B cell (primary cell): ENCODE measurements at regions of chr11 and their contacts with region 1.

Region 1: DNA sequence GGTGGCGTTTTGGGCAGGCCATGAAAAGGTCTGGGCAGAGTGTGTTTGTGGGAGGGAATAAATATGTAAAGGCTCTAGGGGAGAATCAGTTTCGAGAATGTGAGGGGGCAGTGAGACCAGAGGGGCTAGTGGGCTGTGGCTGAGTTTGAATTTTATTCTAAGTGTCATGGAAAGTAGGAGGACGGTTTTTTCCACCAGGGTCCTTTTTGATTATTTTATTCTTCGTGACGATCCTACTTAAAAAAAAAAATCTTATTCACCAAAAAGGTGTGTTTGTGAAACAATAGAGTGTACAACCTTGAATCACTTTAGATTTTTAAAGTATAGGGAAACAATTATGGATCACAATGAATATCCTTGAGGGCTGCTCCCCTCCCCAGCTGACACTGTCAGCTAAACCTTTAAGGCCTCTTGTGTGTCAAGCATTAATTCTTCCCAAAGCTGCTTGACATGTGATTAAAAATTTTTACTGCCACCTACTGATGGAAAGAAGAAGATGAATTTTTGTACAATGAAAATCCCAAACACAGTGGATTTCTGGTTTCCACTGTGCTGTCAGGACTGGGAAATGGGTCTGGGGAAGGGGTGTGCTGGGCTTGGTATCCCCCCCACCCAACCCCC is 107.5 kb upstream of the OR4B1 start:
- DNase-seq: no peak
- ATAC-seq: peak; percentile 12
- H3K4me3 ChIP-seq: peak overlapping the region; percentile 5 to 68 (median 39)
- H3K4me3 Mint-ChIP-seq: peak overlapping the region; percentile 74
- H3K27ac ChIP-seq: peak overlapping the region; percentile 54 to 80
- H3K27ac Mint-ChIP-seq: peak overlapping the region; percentile 70
- H3K4me1 ChIP-seq: peaks cover 69 to 78% of the 10 kb centered on the region in 2 donors
- H3K4me1 Mint-ChIP-seq: peaks cover 70% of the 10 kb centered on the region
- H3K27me3 ChIP-seq: no peaks in the 10 kb centered on the region
- H3K27me3 Mint-ChIP-seq: no peaks in the 10 kb centered on the region
- CTCF ChIP-seq: no peak

Region 2: DNA sequence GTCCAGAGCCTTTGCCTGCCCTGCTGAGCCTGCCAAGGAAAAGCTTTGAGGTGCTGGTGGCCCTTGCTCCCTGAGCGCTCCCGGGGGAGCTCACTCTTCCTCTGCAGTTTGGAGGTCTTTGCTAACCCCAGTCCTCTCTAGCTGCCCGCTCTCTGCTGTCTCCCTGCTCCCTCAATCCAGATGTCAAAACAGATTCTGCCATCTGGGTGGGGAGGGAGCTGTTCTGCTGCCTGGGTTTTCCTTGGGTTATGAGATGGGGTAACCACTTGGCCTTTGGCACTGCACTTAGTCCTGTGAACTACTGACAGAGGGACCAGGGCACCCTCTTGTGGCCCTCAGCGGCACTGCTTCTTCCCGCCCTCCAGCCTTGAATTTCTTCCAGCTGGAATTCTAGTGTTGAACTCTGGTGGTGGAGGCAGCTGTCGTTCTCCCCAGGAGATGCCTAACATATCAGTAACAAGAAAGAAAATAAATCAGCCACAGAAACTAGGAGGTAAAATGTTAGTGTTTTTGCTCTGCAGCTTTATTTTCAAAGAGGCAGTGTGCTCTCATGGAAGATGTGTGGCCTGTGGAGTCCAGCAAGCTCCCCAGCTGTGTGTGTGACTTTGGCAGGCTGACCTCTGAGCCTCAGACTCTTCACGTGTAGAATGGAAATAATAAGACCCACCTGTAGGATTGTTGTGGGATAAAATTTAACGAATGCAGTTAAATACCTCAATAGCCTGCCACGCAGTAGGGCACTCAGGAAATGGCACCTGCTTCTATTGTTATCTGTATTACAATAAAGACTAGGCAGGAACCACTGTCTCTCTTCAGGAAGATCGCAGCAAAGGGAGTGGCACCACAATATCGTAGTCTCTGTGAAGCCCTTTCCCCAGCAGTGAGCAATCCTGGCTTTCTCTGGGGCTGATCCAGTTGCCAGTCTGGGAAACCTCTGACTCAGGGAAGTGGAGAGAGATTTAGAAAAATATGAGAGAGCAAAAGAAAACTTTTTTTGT is 955.9 kb before region 1 on chr11:
- CTCF ChIA-PET with region 1: no interaction called
- POLR2A ChIA-PET with region 1: no interaction called
- intact Hi-C with region 1: no loop called
- DNase-seq: peak; percentile 67
- ATAC-seq: peak; percentile 61
- H3K4me3 ChIP-seq: no peak overlapping the region
- H3K4me3 Mint-ChIP-seq: peak overlapping the region; percentile 14
- H3K27ac ChIP-seq: no peak overlapping the region
- H3K27ac Mint-ChIP-seq: no peak overlapping the region
- H3K4me1 ChIP-seq: peaks cover 19 to 36% of the 10 kb centered on the region in 2 donors
- H3K4me1 Mint-ChIP-seq: peaks cover 35% of the 10 kb centered on the region
- H3K27me3 ChIP-seq: no peaks in the 10 kb centered on the region
- H3K27me3 Mint-ChIP-seq: no peaks in the 10 kb centered on the region
- CTCF ChIP-seq: peak; percentile 84

Region 3: GRCh38 chr11:47426061-47426956 is 682.8 kb before region 1 on chr11 and contains the start of gene PSMC3:
- CTCF ChIA-PET with region 1: no interaction called
- POLR2A ChIA-PET with region 1: no interaction called
- intact Hi-C with region 1: loop called (anchors 5 kb)
- DNase-seq: peak; percentile 97
- ATAC-seq: peak; percentile 98
- H3K4me3 ChIP-seq: peak within 1 kb of the TSS; percentile 88 to 99 (median 93)
- H3K4me3 Mint-ChIP-seq: peak within 1 kb of the TSS; percentile 100
- H3K27ac ChIP-seq: peak within 1 kb of the TSS; percentile 78 to 94
- H3K27ac Mint-ChIP-seq: peak within 1 kb of the TSS; percentile 98
- H3K4me1 ChIP-seq: peaks cover 9 to 22% of the 10 kb centered on the region in 2 donors
- H3K4me1 Mint-ChIP-seq: peaks cover 25% of the 10 kb centered on the region
- H3K27me3 ChIP-seq: no peaks in the 10 kb centered on the region
- H3K27me3 Mint-ChIP-seq: no peaks in the 10 kb centered on the region
- CTCF ChIP-seq: no peak
- total RNA-seq, gene PSMC3: 59.9 and 62.7 TPM in 2 replicates

Region 4: DNA sequence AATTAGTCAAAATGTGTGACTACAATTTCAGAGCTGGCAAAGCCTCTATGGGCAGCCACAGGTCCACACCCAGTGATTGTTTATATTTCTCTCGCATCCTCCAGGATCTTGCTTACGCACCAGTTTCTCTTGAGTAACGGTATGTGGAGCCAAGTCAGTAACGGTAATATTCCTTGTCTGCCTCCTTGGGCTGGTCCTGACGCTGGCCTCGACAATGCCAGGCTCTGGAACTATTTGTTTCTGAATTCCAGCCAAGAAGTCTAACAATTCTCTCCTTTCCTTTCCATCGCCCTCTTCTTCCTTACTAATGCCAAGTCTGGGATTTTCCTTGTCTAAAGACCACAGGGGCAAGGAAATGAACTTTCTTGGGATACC is 251.0 kb before region 1 on chr11:
- CTCF ChIA-PET with region 1: interaction called, 89 read pairs
- POLR2A ChIA-PET with region 1: interaction called, 4 read pairs
- intact Hi-C with region 1: loop called (anchors 1 kb)
- DNase-seq: no peak
- ATAC-seq: no peak
- H3K4me3 ChIP-seq: peak overlapping the region in 1 of 5 experiments; percentile 54
- H3K4me3 Mint-ChIP-seq: peak overlapping the region; percentile 63
- H3K27ac ChIP-seq: peak overlapping the region; percentile 80 to 84
- H3K27ac Mint-ChIP-seq: peak overlapping the region; percentile 86
- H3K4me1 ChIP-seq: peaks cover 98 to 99% of the 10 kb centered on the region in 2 donors
- H3K4me1 Mint-ChIP-seq: peaks cover 64% of the 10 kb centered on the region
- H3K27me3 ChIP-seq: no peaks in the 10 kb centered on the region
- H3K27me3 Mint-ChIP-seq: no peaks in the 10 kb centered on the region
- CTCF ChIP-seq: no peak

Region 5: DNA sequence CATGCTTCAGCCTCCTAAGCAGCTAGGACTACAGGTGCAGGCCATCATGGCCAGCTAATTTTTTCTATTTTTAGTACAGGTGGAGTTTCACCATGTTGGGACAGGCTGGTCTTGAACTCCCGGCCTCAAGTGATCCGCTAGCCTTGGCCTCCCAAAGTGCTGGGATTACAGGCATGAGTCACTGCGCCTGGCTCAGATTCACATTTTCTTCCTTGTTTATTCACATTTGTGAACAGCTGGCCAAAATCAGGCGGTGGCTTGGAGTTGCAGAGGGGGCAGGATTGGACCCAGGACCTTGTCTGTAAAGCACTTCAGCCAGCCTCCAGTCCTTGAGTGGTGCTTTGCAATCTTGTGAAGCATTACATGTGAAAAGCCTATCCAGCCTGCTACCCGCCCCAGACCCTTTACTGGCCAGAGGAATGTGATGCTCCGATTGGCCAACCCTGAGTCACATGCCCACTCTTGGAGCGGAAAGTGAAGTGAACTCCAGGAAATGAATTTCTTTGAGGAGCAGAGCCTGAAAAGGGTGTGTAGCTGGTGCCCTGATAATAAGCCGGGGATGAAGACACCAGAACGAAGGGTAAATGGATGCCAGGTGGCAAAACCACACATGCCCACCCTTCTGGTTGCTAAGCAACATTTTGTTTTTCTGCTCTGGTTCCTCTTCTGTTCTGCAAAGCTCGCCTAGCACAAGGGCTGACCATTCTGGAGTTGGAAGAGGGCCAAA is 191.3 kb before region 1 on chr11:
- CTCF ChIA-PET with region 1: interaction called, 11 read pairs
- POLR2A ChIA-PET with region 1: interaction called, 4 read pairs
- intact Hi-C with region 1: loop called (anchors 1 kb)
- DNase-seq: peak; percentile 93
- ATAC-seq: peak; percentile 69
- H3K4me3 ChIP-seq: peak overlapping the region in 1 of 5 experiments; percentile 20
- H3K4me3 Mint-ChIP-seq: peak overlapping the region; percentile 61
- H3K27ac ChIP-seq: peak overlapping the region; percentile 89 to 93
- H3K27ac Mint-ChIP-seq: peak overlapping the region; percentile 98
- H3K4me1 ChIP-seq: peaks cover 87 to 98% of the 10 kb centered on the region in 2 donors
- H3K4me1 Mint-ChIP-seq: peaks cover 84% of the 10 kb centered on the region
- H3K27me3 ChIP-seq: no peaks in the 10 kb centered on the region
- H3K27me3 Mint-ChIP-seq: no peaks in the 10 kb centered on the region
- CTCF ChIP-seq: no peak

Region 6: GRCh38 chr11:47950396-47950795 is 158.8 kb before region 1 on chr11:
- CTCF ChIA-PET with region 1: interaction called, 5 read pairs
- POLR2A ChIA-PET with region 1: interaction called, 3 read pairs
- intact Hi-C with region 1: loop called (anchors 1 kb)
- DNase-seq: peak; percentile 91
- ATAC-seq: peak; percentile 98
- H3K4me3 ChIP-seq: peak overlapping the region in 2 of 5 experiments; percentile 19 to 49
- H3K4me3 Mint-ChIP-seq: peak overlapping the region; percentile 48
- H3K27ac ChIP-seq: peak overlapping the region; percentile 58 to 66
- H3K27ac Mint-ChIP-seq: peak overlapping the region; percentile 86
- H3K4me1 ChIP-seq: peaks cover 34 to 42% of the 10 kb centered on the region in 2 donors
- H3K4me1 Mint-ChIP-seq: peaks cover 48% of the 10 kb centered on the region
- H3K27me3 ChIP-seq: no peaks in the 10 kb centered on the region
- H3K27me3 Mint-ChIP-seq: no peaks in the 10 kb centered on the region
- CTCF ChIP-seq: no peak

Region 7: DNA sequence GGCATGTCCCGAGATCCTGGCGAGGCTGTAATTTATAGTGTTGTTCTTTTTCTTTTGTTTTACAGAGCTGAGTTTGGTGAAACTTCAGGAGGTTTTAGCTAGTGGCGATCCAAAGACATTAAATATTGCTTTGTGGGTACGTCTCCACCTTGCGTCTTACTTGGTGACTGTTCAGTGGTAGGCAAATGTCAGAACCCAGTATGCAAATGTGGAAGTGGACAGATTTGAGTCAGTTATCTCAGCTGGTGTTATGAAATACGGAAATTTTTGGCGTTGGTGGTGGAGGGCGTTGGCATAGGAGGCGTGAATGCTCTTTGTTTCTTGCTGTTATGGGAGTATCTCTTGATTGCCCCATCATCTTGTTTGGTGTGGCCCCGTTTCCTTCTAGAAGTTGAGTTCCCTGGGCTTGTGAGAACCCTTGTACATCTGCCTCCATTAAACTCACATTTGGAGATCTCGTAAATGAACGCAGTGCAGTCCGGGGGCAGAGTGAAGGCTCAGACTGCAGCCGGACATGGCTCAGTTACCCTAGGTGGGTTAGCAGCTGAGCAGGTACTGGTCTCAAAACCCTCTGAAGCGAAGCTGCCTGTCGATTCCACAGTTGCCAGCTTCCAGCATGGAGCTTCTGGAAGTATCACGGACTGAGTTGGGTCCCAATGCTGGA is 88.9 kb before region 1 on chr11:
- CTCF ChIA-PET with region 1: interaction called, 23 read pairs
- POLR2A ChIA-PET with region 1: interaction called, 4 read pairs
- intact Hi-C with region 1: no loop called
- DNase-seq: peak; percentile 75
- ATAC-seq: peak; percentile 79
- H3K4me3 ChIP-seq: peak overlapping the region in 2 of 5 experiments; percentile 32 to 55
- H3K4me3 Mint-ChIP-seq: peak overlapping the region; percentile 54
- H3K27ac ChIP-seq: peak overlapping the region; percentile 53 to 55
- H3K27ac Mint-ChIP-seq: peak overlapping the region; percentile 32
- H3K4me1 ChIP-seq: peaks cover 62 to 87% of the 10 kb centered on the region in 2 donors
- H3K4me1 Mint-ChIP-seq: peaks cover 79% of the 10 kb centered on the region
- H3K27me3 ChIP-seq: no peaks in the 10 kb centered on the region
- H3K27me3 Mint-ChIP-seq: no peaks in the 10 kb centered on the region
- CTCF ChIP-seq: peak; percentile 26

Region 8: GRCh38 chr11:48087974-48088681 is 21.0 kb before region 1 on chr11:
- CTCF ChIA-PET with region 1: no interaction called
- POLR2A ChIA-PET with region 1: no interaction called
- intact Hi-C with region 1: no loop called
- DNase-seq: no peak
- ATAC-seq: no peak
- H3K4me3 ChIP-seq: no peak overlapping the region
- H3K4me3 Mint-ChIP-seq: no peak overlapping the region
- H3K27ac ChIP-seq: no peak overlapping the region
- H3K27ac Mint-ChIP-seq: no peak overlapping the region
- H3K4me1 ChIP-seq: peaks cover 15 to 19% of the 10 kb centered on the region in 2 donors
- H3K4me1 Mint-ChIP-seq: peaks cover 42% of the 10 kb centered on the region
- H3K27me3 ChIP-seq: no peaks in the 10 kb centered on the region
- H3K27me3 Mint-ChIP-seq: no peaks in the 10 kb centered on the region
- CTCF ChIP-seq: no peak